ENCODE measurements at regions of chr11 and their contacts with region 1.

Region 1: GRCh38 chr11:108654994-108655631 is 9.8 kb upstream of the DDX10 start:
- DNase-seq: no peak
- H3K4me3 ChIP-seq: no peak overlapping the region
- H3K27me3 ChIP-seq: no peaks in the 10 kb centered on the region
- CTCF ChIP-seq: peak; percentile 72

Region 2: GRCh38 chr11:108117746-108118371 is 537.3 kb before region 1 on chr11:
- CTCF ChIA-PET with region 1: interaction called, 15 read pairs
- POLR2A ChIA-PET with region 1: no interaction called
- DNase-seq: no peak
- H3K4me3 ChIP-seq: no peak overlapping the region
- H3K27me3 ChIP-seq: no peaks in the 10 kb centered on the region
- CTCF ChIP-seq: peak; percentile 54

Region 3: DNA sequence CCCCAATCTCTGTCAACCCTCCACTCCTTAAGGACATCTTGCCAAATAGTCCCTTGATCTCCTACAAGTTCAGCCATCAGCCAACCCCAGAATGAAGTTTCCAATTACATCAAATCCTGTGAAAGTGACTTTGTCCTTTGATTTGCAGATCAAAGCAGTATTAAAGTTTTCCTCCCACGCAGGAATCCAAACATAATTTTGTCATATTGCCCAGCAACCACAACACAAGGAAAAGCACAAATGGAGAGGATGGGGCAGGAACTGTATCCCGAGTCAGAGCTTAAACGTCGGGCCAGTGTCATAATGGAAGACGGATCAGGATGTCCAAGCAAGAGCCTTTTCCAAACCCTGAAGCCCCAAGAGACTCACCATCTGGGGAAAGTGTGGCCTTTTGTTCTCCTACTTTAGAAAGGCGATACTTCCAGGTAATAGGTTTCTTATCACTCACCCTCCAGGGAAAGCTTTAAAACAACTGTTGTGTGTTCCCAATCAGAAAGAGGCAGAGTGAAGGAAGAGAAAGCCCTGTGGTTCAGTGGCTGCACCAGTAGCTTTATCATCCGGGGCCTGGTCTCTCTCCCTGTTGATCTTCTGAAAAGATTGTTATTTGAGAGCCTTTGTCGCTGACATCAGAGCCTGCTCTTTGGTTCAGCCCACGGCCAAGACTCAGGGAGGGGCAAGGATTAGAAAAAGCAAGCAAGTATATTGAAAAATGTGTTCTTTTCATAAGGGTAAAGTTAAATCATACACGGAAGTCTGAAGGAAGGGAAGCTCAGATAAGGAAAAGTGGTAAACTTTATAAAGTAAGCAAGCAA is 103.3 kb before region 1 on chr11:
- CTCF ChIA-PET with region 1: no interaction called
- POLR2A ChIA-PET with region 1: no interaction called
- DNase-seq: no peak
- H3K4me3 ChIP-seq: no peak overlapping the region
- H3K27me3 ChIP-seq: no peaks in the 10 kb centered on the region
- CTCF ChIP-seq: no peak

Measured in BJ (cell line).